GM18951 (cell line): ENCODE measurements at regions of chr1 and their contacts with region 1.

Region 1: GRCh38 chr1:201783572-201783971 is 45.4 kb upstream of the IPO9 start:
- POLR2A ChIP-seq: no peak

Region 2: DNA sequence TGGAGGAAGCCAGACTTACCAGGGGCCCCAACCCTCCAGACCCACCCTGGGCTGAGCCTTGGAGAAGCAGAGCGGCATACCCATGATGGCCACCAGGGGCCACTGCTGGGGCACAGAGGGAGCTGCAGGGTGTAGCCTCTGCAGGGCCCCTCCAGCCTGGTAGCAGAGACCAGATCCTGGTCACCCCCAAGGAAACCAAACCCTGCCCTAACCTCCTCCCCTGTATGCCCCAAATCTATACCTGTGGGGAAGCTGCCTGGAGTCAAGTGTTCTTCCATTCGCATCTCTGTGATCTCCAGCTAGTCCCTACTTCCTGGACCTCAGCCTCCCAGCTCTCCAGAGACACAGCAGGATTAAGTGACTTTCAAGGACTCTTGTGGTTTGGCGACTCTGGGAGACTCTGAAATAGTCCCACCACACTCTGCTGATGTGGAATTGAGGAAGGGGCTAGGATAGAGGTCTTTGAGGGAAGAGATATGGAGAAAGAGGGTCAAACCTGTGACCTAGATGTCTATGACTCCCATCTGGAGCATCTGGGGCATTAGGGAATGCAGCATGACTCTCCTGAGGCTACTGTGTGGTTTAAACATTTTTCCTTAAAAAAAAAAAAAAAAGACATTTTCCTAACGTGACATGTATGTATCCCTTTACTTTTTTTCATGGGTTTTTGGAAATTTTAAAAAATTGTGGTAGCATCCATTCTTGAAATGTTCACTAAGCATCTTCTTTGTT is 73.8 kb before region 1 on chr1:
- in situ Hi-C with region 1: loop called (anchors 5 kb)
- POLR2A ChIP-seq: no peak